Activated naive CD4-positive, alpha-beta T cell treated with anti-CD3 and anti-CD28 coated beads for 36 hours (primary cell): ENCODE measurements at regions of chr5 and their contacts with region 1.

Region 1: DNA sequence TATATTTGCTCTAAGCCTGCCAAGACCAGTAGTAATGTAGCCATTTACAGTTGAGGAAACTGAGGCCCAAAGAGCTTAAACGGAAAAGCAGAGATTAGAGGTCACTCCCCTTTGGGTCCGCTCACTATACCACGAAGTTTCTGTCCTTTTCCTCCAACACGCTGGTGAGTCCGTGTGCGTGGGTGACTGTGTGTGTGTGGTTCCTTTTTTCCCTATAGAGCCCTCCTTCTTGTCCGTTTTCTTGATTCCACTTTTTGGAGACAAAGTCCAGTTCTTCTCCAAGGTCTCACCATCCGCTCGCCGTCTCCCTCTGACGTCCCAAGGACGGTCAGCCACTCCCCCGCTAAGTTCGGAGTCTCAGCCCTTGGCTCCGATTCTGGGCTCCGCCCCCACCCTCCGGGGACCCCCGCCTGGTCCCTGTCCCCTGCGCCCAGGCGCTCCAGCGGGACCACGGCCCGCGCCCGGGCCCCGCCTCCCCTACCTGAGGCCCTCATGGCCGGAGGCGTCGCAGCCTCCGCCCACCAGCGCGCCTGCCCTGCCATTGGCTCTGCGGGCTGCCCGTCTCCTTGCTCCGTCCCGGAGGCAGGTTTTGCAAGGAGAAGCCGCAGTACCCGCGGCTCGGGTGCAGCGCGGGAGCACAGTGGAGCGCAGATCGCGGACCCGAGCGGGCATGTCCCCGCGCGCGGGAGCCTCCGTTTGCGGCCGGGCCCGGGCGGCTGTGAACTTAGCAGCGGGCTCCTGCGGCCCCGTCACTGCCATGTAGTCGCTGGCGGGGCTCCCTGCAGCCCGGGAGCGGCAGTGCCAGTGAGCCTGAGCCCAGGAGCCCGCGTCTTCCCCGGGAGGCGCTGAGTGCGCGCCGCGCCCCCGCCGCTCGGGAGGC is at the start of gene MAST4:
- DNase-seq: peak; percentile 88
- H3K4me3 Mint-ChIP-seq: peak within 1 kb of the TSS; percentile 76
- H3K27ac Mint-ChIP-seq: no peak within 1 kb of the TSS
- H3K4me1 Mint-ChIP-seq: peaks cover 9% of the 10 kb centered on the region
- H3K27me3 Mint-ChIP-seq: peaks cover 56% of the 10 kb centered on the region
- total RNA-seq, gene MAST4: 27.7 to 28.8 TPM

Region 2: GRCh38 chr5:66617226-66617861 is 21.3 kb after region 1 on chr5:
- CTCF ChIA-PET with region 1: no interaction called
- intact Hi-C with region 1: no loop called
- DNase-seq: peak; percentile 12
- H3K4me3 Mint-ChIP-seq: no peak overlapping the region
- H3K27ac Mint-ChIP-seq: no peak overlapping the region
- H3K4me1 Mint-ChIP-seq: peaks cover 19% of the 10 kb centered on the region
- H3K27me3 Mint-ChIP-seq: peaks cover 20% of the 10 kb centered on the region

Region 3: DNA sequence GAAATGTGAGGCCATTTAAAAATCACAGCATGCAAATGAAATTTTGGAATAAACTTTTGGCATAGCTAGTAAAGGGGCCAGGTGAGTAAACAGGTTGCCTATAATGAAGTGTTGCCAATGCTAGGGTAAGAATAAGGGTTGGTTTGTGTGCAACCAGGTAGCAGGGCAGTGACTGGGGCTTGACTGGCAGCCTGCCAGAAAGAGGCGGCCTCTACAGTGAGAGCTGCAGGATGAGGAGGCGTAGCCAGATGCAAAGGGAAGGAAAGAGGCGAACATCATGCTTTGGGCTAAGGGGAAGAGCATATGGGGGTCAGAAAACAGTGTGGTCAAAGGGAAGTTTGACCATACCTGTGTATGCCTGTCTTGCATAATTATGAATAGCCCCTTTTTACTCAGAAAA is 70.8 kb after region 1 on chr5:
- CTCF ChIA-PET with region 1: no interaction called
- intact Hi-C with region 1: loop called (anchors 5 kb)
- DNase-seq: no peak
- H3K4me3 Mint-ChIP-seq: no peak overlapping the region
- H3K27ac Mint-ChIP-seq: no peak overlapping the region
- H3K4me1 Mint-ChIP-seq: no peaks in the 10 kb centered on the region
- H3K27me3 Mint-ChIP-seq: peaks cover 13% of the 10 kb centered on the region

Region 4: DNA sequence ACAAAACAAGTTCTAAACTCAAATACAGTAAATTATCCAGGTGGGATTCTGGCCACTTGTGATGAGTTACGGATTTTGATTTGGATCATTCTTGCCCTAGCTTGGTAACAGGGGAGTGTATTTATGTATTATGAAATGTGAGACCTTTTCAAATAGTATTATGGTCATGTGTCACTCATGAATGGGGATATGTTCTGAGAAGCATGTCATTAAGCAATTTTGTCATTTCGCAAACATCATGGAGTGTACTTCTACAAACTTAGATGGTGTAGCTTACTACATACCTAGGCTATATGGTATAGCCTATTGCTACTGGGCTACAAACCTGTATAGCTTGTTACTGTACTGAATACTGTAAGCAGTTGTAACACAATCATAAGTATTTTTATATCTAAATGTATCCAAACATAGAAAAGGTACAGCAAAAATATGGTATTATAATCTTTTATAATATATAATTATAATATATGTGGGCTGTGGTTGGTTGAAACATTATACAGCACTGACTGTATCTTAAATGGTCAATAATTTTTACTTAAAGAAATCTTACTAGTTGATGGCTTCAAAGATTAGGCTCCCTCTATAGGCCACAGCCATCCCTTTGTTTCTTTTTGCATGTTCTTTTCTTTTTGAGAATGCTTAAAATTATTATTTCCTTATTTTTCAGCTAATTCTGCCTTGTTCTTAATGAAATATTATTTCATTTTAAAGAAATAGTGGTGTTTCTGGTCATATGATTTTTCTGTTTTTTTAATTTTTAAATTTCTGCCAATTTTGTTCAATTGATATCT is 128.5 kb after region 1 on chr5:
- CTCF ChIA-PET with region 1: no interaction called
- intact Hi-C with region 1: no loop called
- DNase-seq: no peak
- H3K4me3 Mint-ChIP-seq: no peak overlapping the region
- H3K27ac Mint-ChIP-seq: no peak overlapping the region
- H3K4me1 Mint-ChIP-seq: no peaks in the 10 kb centered on the region
- H3K27me3 Mint-ChIP-seq: peaks cover 17% of the 10 kb centered on the region